ENCODE measurements at regions of chr3 and their contacts with region 1.

Region 1: GRCh38 chr3:159804726-159805410 is 183.8 kb upstream of the IL12A start:
- DNase-seq: peak; percentile 77 to 88
- ATAC-seq: peak; percentile 96 to 99
- H3K4me3 ChIP-seq: no peak overlapping the region
- H3K27ac ChIP-seq: peak overlapping the region in 1 of 2 experiments; percentile 57; a peak in 1 of 6 replicates
- H3K4me1 ChIP-seq: peaks cover 14% of the 10 kb centered on the region
- CTCF ChIP-seq: peak; percentile 96
- EP300 ChIP-seq: no peak
- POLR2A ChIP-seq: no peak
- RAD21 ChIP-seq: peak; percentile 98 to 99

Region 2: DNA sequence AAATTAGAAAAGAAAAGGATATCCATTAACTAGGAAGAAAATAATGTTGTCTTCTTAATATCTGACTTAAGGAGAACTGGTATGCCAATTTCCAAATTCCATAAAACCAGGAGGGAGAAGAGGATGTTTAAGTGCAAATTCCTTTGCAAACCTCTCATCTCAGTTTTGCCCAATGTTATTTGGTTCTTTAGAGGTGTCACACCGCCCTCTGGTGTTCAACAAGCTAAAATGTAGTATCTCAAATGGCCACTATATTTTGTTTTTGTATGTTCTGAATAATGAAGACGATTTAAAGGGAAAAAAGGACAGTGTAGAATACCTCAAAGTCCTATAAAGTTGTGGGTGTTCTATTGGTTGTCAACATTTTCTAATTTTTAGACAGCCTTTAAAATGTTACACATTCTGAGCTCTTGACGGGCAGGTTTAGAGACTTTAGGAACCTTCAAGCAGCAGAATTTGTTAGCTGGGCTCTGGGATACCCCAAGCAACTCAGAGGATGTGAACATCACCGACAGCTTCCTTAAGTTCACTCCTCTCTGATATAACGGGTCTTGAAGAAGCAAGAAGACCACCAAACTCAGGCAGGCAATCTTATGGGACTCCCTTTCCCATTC is 544.7 kb before region 1 on chr3:
- CTCF ChIA-PET with region 1: interaction called, 95 read pairs
- POLR2A ChIA-PET with region 1: no interaction called
- DNase-seq: peak; percentile 19 to 65
- ATAC-seq: peak; percentile 57 to 82; a peak in 4 of 6 replicates
- H3K4me3 ChIP-seq: no peak overlapping the region
- H3K27ac ChIP-seq: no peak overlapping the region
- H3K4me1 ChIP-seq: no peaks in the 10 kb centered on the region
- CTCF ChIP-seq: peak; percentile 86
- EP300 ChIP-seq: no peak
- POLR2A ChIP-seq: no peak
- RAD21 ChIP-seq: peak; percentile 90 to 92

Region 3: GRCh38 chr3:159616212-159616825 is 188.5 kb before region 1 on chr3:
- CTCF ChIA-PET with region 1: interaction called, 26 read pairs
- POLR2A ChIA-PET with region 1: no interaction called
- DNase-seq: peak; percentile 34 to 67
- ATAC-seq: peak; percentile 62 to 86; a peak in 4 of 6 replicates
- H3K4me3 ChIP-seq: no peak overlapping the region
- H3K27ac ChIP-seq: peak overlapping the region; percentile 1 to 29; a peak in 2 of 6 replicates
- H3K4me1 ChIP-seq: peaks cover 27% of the 10 kb centered on the region
- CTCF ChIP-seq: peak; percentile 67
- EP300 ChIP-seq: no peak
- POLR2A ChIP-seq: no peak
- RAD21 ChIP-seq: peak; percentile 91 to 96

Region 4: DNA sequence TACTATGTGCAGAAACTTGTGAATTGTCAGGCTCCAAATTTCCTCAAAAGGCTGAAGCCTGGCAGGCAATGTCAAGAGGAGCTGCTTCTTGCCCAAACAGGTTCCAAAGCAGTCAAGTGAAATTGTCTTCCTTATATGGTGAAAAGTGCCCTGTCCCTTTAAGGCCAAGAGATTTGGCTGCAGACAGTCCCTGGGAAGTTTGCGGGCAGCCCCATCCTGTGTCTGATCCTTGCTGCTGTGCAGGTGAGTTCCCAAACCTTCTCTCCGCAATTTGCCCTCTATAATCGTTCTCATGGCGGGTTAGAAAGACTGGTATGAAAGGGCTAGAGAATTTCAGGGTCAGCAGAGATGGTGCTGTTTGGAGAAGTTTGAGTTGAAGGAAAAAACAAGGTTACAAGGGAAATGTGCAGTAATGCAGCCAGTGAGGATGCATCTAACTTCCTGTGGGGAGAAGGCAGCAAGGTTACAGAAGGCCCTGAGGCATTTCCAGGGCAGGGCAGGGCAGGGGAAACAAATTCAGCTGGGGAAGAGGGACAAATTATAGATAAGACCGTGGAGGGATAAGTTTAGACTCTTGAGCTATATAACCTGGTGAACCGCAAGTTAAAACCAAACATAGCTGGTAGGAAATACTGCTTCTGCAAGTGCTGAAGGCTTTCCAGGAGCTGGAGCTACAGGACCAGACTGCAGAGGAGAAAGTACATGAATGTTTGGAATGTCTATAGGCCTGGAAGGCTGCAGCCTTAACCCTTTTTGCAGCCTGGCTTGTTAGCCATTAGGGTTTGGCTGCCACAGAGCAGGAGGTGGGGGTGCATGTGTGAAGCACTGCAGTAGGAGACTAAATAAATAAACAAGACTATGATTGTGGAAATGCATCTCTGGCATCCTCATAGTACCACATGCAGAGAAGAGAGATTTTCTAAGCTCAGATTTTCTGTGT is 72.4 kb before region 1 on chr3:
- CTCF ChIA-PET with region 1: interaction called, 10 read pairs
- POLR2A ChIA-PET with region 1: no interaction called
- DNase-seq: peak; percentile 50 to 64
- ATAC-seq: peak; percentile 90 to 93
- H3K4me3 ChIP-seq: peak overlapping the region; percentile 39
- H3K27ac ChIP-seq: peak overlapping the region; percentile 69 to 81
- H3K4me1 ChIP-seq: peaks cover 33% of the 10 kb centered on the region
- CTCF ChIP-seq: no peak
- EP300 ChIP-seq: 0 out of 5 replicates have a peak, but pooled peaks of 1 of the 2 experiments have one; percentile 41
- POLR2A ChIP-seq: no peak
- RAD21 ChIP-seq: peak; percentile 28 to 31; a peak in 3 of 5 replicates

Region 5: GRCh38 chr3:159775372-159775961 is 29.4 kb before region 1 on chr3:
- CTCF ChIA-PET with region 1: interaction called, 79 read pairs
- POLR2A ChIA-PET with region 1: no interaction called
- DNase-seq: no peak
- ATAC-seq: peak; percentile 73 to 74; a peak in 5 of 6 replicates
- H3K4me3 ChIP-seq: no peak overlapping the region
- H3K27ac ChIP-seq: peak overlapping the region in 1 of 2 experiments; percentile 39; a peak in 2 of 6 replicates
- H3K4me1 ChIP-seq: peaks cover 31% of the 10 kb centered on the region
- CTCF ChIP-seq: no peak
- EP300 ChIP-seq: no peak
- POLR2A ChIP-seq: no peak
- RAD21 ChIP-seq: no peak

Region 6: DNA sequence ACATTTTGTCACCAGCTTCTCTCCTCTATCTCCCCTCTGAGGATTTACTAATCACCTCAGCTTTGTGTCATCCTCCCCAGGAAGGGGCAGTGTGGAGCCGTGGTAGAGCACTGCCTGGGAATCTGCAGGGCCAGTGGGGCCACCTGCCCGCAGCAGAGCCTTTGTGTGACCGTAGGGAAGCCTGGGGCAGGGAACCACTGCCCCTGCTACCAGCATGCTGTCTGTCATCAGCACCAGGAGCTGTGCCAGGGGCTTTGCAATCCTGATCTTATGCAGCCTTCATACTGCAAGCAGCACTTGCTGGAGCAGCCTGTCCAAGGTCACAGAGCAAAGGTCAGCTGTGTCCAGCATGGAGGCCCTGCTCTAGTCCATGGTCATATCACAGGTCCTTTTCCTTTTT is 13.5 kb after region 1 on chr3:
- CTCF ChIA-PET with region 1: interaction called, 29 read pairs
- POLR2A ChIA-PET with region 1: no interaction called
- DNase-seq: no peak
- ATAC-seq: peak in 1 of 2 experiments; percentile 51; a peak in 3 of 6 replicates
- H3K4me3 ChIP-seq: no peak overlapping the region
- H3K27ac ChIP-seq: 0 out of 6 replicates have a peak overlapping the region, but pooled peaks of 1 of the 2 experiments have one; percentile 5
- H3K4me1 ChIP-seq: peaks cover 25% of the 10 kb centered on the region
- CTCF ChIP-seq: no peak
- EP300 ChIP-seq: no peak
- POLR2A ChIP-seq: no peak
- RAD21 ChIP-seq: peak in 1 of 2 experiments; percentile 25; a peak in 2 of 5 replicates

Measured in A549 (cell line).